Activated CD4-positive, alpha-beta T cell treated with anti-CD3 and anti-CD28 coated beads for 36 hours (primary cell): ENCODE measurements at regions of chr17 and their contacts with region 1.

Region 1: DNA sequence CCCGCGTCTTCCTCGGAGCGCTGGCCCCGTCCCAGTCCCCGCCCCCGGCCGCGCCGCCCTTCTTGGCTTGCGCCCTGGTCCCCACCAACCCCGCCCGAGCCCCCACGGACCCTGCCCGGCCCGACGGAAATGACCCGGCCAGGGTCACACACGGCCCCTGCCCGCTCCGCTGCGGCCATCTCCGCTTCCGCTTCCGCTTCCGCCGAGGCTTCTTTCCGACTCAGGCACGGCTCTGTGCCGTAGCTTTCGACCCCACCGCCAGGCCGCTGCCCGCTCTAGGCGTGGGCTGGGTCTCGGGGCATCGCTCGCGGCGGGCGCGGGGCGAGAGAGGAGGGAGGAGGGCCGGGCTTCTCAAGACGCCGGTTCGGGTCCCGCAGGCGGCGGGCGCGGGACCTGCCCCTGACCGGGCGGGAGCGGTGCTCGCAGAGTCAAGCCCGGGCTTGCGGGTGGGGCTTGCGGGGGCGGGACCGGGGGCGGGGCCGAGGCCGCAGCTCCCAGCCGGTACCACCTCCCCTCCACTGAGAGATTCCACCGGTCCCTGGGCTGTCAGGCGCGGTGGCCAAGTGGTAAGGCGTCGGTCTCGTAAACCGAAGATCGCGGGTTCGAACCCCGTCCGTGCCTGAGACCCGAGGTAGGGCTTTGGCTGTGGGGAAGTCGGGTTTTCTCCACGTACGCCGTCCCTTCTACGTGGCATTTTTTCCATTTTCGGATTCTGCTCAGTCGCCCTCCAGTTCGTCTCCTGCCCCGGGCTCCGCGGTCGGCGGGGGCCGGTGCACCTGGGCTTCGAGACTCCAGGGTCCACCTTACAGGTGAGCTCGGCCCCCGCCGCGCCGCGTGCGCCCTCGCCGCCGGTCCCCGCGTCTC is 158.3 kb downstream of the RAB11FIP4 start:
- DNase-seq: peak; percentile 95
- ATAC-seq: peak; percentile 81
- H3K4me3 Mint-ChIP-seq: peak overlapping the region; percentile 88
- H3K27ac Mint-ChIP-seq: peak overlapping the region; percentile 82
- H3K4me1 Mint-ChIP-seq: peaks cover 17% of the 10 kb centered on the region
- H3K27me3 Mint-ChIP-seq: no peaks in the 10 kb centered on the region

Region 2: GRCh38 chr17:31094600-31095238 is 455.0 kb before region 1 on chr17 and contains the start of gene NF1:
- CTCF ChIA-PET with region 1: no interaction called
- POLR2A ChIA-PET with region 1: no interaction called
- intact Hi-C with region 1: loop called in 1 of 2 experiments (anchors 10 kb)
- DNase-seq: peak; percentile 94
- ATAC-seq: peak; percentile 89
- H3K4me3 Mint-ChIP-seq: peak within 1 kb of the TSS; percentile 94
- H3K27ac Mint-ChIP-seq: peak within 1 kb of the TSS; percentile 94
- H3K4me1 Mint-ChIP-seq: peaks cover 11% of the 10 kb centered on the region
- H3K27me3 Mint-ChIP-seq: no peaks in the 10 kb centered on the region
- total RNA-seq, gene NF1: 22.1 to 26.2 TPM

Region 3: GRCh38 chr17:31494259-31495021 is 55.3 kb before region 1 on chr17:
- CTCF ChIA-PET with region 1: no interaction called
- POLR2A ChIA-PET with region 1: no interaction called
- intact Hi-C with region 1: loop called in 1 of 2 experiments (anchors 1 kb)
- DNase-seq: peak; percentile 82
- ATAC-seq: peak; percentile 86
- H3K4me3 Mint-ChIP-seq: peak overlapping the region; percentile 58
- H3K27ac Mint-ChIP-seq: peak overlapping the region; percentile 97
- H3K4me1 Mint-ChIP-seq: peaks cover 91% of the 10 kb centered on the region
- H3K27me3 Mint-ChIP-seq: no peaks in the 10 kb centered on the region

Region 4: GRCh38 chr17:31680126-31680525 is 130.4 kb after region 1 on chr17:
- CTCF ChIA-PET with region 1: no interaction called
- POLR2A ChIA-PET with region 1: no interaction called
- intact Hi-C with region 1: loop called in 1 of 2 experiments (anchors 2 kb)
- DNase-seq: peak; percentile 80
- ATAC-seq: peak; percentile 93
- H3K4me3 Mint-ChIP-seq: peak overlapping the region; percentile 5
- H3K27ac Mint-ChIP-seq: peak overlapping the region; percentile 27
- H3K4me1 Mint-ChIP-seq: peaks cover 15% of the 10 kb centered on the region
- H3K27me3 Mint-ChIP-seq: peaks cover 41% of the 10 kb centered on the region

Region 5: DNA sequence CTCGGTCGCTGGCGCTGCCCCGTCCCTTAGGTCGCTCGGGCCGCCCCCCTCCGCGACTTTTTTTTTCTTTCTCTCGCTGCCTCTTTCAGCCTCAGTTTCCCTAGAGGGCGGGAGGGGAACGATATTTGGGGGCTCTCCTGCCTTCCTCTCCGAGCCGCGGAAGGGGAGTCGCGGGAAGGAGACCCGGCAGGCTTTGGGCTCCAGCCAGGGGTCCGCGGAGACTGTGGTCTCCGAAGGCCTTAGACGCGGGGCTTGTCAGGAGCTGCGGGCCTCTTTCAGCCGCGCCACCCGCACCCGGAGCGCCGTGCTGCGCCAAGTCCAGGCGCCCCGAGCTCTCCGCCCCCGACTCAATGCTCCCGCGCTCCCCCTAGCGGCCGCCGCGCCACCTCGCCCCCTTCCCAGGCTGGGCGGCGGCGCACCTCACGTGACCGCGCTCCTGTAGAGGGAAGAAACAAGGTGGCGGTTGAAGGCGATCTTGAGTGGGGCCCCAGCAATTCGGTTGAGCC is 457.3 kb after region 1 on chr17 and contains the start of gene LRRC37B:
- CTCF ChIA-PET with region 1: no interaction called
- POLR2A ChIA-PET with region 1: no interaction called
- intact Hi-C with region 1: loop called in 1 of 2 experiments (anchors 5 kb)
- DNase-seq: peak; percentile 94
- ATAC-seq: peak; percentile 91
- H3K4me3 Mint-ChIP-seq: peak within 1 kb of the TSS; percentile 86
- H3K27ac Mint-ChIP-seq: peak within 1 kb of the TSS; percentile 90
- H3K4me1 Mint-ChIP-seq: peaks cover 26% of the 10 kb centered on the region
- H3K27me3 Mint-ChIP-seq: no peaks in the 10 kb centered on the region
- total RNA-seq, gene LRRC37B: 14.3 to 16.6 TPM